Natural killer cell (primary cell): ENCODE measurements at regions of chr12 and their contacts with region 1.

Region 1: DNA sequence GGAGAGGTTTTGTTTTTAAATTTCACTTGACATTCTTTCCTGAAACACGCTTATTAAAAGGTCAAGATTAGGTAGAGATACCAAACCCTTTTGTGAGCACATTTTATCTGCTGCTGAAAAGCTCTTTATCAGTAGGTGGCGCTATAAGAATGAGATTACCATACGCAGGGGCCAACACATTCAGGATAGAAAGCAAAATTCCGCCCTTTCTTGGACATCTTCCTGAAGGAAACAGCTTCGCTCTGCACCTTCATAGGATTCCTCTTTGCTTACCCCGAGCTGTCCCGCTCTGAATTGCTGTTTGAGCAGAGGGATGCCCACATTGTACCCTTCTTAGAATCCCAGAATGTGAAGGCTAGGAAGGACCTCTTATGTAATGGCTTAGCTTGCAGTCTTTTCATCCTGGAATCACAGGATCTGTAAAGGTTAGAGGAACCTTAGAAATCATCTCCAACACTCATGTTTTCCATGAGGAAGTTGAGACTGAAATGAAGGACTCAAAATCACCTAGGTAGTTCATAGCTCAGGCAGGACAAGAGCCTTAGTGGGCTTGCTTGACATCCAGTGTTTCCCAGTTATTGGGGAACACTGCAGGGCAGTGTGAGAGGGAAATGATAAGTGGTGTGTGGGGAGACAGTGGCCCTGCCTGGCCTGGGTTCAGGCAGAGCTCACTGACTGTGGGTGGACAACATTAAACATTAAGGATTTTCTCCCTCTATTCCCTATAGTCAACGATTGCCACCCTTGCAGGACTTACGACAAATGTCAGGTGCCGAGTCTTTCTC is 38.7 kb upstream of the CRY1 start:
- DNase-seq: peak in 1 of 2 donors; percentile 73
- ATAC-seq: peak in 2 of 3 donors; percentile 46 to 64
- H3K4me3 ChIP-seq: no peak overlapping the region
- H3K4me3 Mint-ChIP-seq: no peak overlapping the region
- H3K27ac ChIP-seq: no peak overlapping the region
- H3K27ac Mint-ChIP-seq: peak overlapping the region in 1 of 2 donors; percentile 11
- H3K4me1 ChIP-seq: peaks cover 6% of the 10 kb centered on the region
- H3K4me1 Mint-ChIP-seq: peaks cover 4 to 7% of the 10 kb centered on the region in 2 donors
- H3K27me3 ChIP-seq: no peaks in the 10 kb centered on the region
- H3K27me3 Mint-ChIP-seq: peaks cover 2 to 7% of the 10 kb centered on the region in 2 donors
- CTCF ChIP-seq: peak; percentile 86

Region 2: DNA sequence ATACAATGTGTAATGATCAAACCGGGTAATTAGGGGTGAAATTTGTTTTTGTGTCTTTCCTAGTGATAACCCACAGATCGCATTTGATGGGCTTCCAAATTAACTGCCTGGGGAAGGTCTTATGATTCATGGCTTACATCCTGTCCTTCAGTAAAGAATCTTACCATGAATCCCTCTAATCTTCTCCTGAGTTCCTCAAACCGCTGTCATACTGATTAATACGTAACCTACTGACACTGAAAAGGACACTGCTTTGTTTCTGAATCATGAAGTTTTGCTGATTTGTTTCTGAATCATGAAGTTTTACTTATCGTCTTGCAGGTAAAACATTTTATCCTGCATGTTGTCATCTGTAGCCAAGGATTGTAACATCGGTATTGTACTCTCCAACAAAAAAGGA is 13.4 kb after region 1 on chr12:
- intact Hi-C with region 1: no loop called
- DNase-seq: no peak
- ATAC-seq: no peak
- H3K4me3 ChIP-seq: no peak overlapping the region
- H3K4me3 Mint-ChIP-seq: no peak overlapping the region
- H3K27ac ChIP-seq: no peak overlapping the region
- H3K27ac Mint-ChIP-seq: no peak overlapping the region
- H3K4me1 ChIP-seq: no peaks in the 10 kb centered on the region
- H3K4me1 Mint-ChIP-seq: no peaks in the 10 kb centered on the region
- H3K27me3 ChIP-seq: no peaks in the 10 kb centered on the region
- H3K27me3 Mint-ChIP-seq: peaks cover 2 to 7% of the 10 kb centered on the region in 2 donors
- CTCF ChIP-seq: no peak

Region 3: DNA sequence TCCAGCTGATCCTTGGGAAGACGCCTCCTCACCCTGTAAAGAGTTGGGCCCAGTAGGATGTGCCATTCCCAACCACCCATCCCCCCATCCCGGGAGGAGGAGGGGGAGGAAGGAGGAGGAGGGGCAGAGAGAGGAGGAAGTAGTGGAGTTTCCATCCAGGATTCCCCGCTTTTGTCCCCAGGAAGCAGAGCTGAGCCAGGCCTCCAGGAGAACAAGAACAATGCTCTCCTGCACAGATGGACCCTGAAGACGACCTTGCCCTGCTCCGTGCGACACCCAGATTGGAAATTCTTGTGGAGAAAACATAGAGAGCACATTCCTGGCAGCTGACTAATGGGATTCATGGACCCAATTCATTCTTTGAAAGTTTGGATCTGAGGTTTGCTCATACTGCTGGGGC is 93.6 kb after region 1 on chr12:
- intact Hi-C with region 1: no loop called
- DNase-seq: no peak
- ATAC-seq: no peak
- H3K4me3 ChIP-seq: no peak overlapping the region
- H3K4me3 Mint-ChIP-seq: no peak overlapping the region
- H3K27ac ChIP-seq: no peak overlapping the region
- H3K27ac Mint-ChIP-seq: no peak overlapping the region
- H3K4me1 ChIP-seq: no peaks in the 10 kb centered on the region
- H3K4me1 Mint-ChIP-seq: no peaks in the 10 kb centered on the region
- H3K27me3 ChIP-seq: no peaks in the 10 kb centered on the region
- H3K27me3 Mint-ChIP-seq: peaks cover 20 to 22% of the 10 kb centered on the region in 2 donors
- CTCF ChIP-seq: no peak

Region 4: DNA sequence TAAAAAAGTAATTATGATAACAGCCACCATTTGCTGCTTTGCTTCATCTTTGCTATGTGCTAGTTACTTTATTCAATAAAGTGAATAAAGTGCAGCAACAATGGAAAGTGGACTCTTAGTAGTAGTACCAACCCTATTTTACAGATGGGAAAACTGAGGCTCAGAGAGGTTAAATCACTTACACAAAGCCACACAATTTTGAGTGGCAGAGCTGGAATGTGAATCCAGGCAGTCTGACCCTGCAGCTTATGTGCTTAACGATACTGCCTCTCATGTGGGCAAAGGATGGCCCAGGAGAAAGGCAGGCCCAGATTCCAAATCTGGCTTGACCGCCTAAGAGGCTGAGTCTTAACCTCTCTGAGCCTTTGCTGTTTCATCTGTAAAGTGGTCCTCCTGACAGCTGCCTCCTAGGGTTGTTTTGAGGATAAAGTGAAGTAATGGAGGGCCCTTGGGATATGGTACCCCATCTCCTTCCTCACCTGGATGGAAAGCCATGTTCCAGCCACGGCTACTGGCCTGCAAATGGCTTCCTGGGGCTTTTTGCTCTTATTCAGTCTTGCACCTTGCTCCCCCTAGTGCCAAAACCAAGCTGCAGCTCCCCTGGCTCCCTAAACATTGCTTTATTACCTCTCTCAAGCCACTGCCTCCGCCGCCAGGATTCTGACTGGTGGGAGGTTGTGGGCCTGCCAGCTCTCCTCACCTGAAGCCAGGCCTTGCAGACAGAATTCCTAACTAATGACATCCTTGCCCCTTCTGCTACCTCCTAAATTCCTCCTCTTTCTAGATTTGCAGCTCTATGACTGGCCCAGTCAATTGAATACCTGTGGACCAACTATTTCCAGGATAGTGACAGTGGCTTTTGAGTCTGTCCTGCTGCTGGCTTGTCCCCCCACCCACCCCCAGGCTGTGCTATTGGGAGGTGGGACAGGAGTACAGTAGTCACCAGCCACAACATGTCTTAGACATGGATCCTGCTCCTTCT is 270.3 kb after region 1 on chr12:
- intact Hi-C with region 1: loop called (anchors 1 kb)
- DNase-seq: peak; percentile 40 to 78
- ATAC-seq: peak; percentile 61 to 86 (median 82)
- H3K4me3 ChIP-seq: no peak overlapping the region
- H3K4me3 Mint-ChIP-seq: no peak overlapping the region
- H3K27ac ChIP-seq: no peak overlapping the region
- H3K27ac Mint-ChIP-seq: no peak overlapping the region
- H3K4me1 ChIP-seq: peaks cover 4% of the 10 kb centered on the region
- H3K4me1 Mint-ChIP-seq: peaks cover 7 to 14% of the 10 kb centered on the region in 2 donors
- H3K27me3 ChIP-seq: no peaks in the 10 kb centered on the region
- H3K27me3 Mint-ChIP-seq: no peaks in the 10 kb centered on the region
- CTCF ChIP-seq: peak; percentile 73